Activated B cell treated with CpG ODN at 0.5 μM for 24 hours (primary cell): ENCODE measurements at regions of chr6 and their contacts with region 1.

Region 1: DNA sequence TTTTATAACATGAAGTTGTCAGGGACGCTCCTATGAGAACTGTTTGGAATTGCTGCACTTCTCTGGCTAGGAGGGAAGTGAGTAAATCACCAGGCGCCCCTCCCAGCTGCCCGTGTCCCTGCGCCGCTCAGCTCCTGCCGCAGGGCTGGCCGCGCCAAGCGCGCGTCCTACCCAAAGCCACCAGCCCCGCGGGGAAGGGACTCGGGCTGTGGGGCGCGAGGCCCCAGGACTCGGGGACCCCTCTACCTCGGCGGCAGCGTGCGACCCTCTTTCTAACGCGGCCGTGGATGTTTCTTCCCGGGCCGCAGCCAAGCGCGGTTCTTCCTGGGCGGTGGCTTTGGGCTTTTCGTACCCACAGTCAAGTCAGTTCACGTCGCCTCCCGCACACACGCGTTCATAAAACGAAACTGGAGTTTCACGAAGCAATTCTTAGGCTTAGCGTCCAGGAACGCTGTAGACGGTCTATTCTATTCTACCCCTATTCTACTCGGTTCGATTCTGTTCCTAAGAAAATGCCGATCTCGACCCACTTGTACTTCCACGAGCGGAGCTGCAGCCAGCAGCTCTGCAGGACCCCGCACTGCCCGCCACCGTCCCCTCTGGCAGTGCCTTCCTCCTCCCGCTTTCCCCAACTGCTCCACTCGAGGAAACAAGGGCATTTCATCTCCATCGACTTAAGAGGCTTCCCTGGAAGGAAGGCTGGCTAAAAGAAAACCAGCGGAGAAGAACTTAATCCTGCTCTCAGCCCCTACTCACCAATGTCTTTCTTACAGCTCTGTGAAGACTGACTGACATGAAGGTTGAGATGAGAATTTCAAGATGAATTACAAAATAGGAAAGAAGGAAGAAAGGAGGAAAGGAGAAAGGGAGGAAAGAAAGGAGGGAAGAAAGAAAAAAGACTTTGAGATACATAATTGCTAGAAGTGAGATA is 15.4 kb downstream of the FOXC1 start:
- DNase-seq: no peak
- ATAC-seq: peak; percentile 53
- H3K4me3 Mint-ChIP-seq: peak overlapping the region; percentile 78
- H3K27ac Mint-ChIP-seq: no peak overlapping the region
- H3K4me1 Mint-ChIP-seq: peaks cover 17% of the 10 kb centered on the region
- H3K27me3 Mint-ChIP-seq: peaks cover 67% of the 10 kb centered on the region
- CTCF ChIP-seq: no peak

Region 2: DNA sequence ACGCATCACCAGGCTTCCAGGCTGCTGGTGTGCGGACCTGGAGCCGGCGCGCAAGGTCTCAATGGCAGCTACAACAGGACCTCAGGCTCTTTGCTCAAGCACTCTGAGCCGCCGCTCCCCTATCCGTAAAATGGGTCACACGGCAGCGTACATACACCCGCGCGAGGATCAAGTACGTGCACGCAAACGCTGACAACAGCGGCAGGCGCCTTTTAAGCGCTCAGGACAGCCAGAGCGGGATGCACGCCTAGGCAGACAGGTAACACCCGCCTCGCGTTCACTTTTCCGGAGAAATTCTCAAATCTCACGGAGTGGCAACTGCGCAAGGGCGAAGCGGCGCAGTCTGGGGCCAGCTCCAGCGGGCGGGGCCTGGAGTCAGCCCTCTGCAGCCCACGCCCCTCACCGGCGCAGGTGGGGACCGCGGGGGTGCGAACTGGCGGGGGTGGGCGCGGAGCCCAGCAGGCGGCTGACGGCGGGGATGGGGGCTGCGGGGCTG is 932.7 kb before region 1 on chr6:
- CTCF ChIA-PET with region 1: no interaction called
- POLR2A ChIA-PET with region 1: no interaction called
- intact Hi-C with region 1: no loop called
- DNase-seq: peak; percentile 65
- ATAC-seq: peak; percentile 90
- H3K4me3 Mint-ChIP-seq: peak overlapping the region; percentile 96
- H3K27ac Mint-ChIP-seq: peak overlapping the region; percentile 85
- H3K4me1 Mint-ChIP-seq: peaks cover 30% of the 10 kb centered on the region
- H3K27me3 Mint-ChIP-seq: no peaks in the 10 kb centered on the region
- CTCF ChIP-seq: no peak

Region 3: DNA sequence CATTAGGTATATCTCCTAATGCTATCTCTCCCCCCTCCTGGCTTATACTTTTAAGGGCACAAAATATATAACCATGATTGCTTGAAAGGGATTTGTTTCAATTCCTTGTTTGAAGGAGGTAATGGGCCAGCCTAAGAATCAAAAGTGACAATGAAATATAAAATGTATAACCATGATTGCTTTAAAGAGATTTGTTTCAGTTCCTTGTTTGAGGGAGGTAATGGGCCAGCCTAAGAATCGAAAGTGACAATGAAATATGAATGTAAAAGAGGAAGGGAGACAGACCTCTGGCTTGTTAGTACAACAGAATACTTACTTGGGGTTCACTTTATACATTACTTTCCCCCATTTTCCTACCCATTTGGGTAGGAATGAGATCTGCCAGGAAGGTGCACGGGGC is 40.1 kb after region 1 on chr6:
- CTCF ChIA-PET with region 1: no interaction called
- POLR2A ChIA-PET with region 1: no interaction called
- intact Hi-C with region 1: loop called (anchors 5 kb)
- DNase-seq: no peak
- ATAC-seq: peak; percentile 92
- H3K4me3 Mint-ChIP-seq: peak overlapping the region; percentile 15
- H3K27ac Mint-ChIP-seq: peak overlapping the region; percentile 80
- H3K4me1 Mint-ChIP-seq: peaks cover 24% of the 10 kb centered on the region
- H3K27me3 Mint-ChIP-seq: peaks cover 7% of the 10 kb centered on the region
- CTCF ChIP-seq: no peak

Region 4: DNA sequence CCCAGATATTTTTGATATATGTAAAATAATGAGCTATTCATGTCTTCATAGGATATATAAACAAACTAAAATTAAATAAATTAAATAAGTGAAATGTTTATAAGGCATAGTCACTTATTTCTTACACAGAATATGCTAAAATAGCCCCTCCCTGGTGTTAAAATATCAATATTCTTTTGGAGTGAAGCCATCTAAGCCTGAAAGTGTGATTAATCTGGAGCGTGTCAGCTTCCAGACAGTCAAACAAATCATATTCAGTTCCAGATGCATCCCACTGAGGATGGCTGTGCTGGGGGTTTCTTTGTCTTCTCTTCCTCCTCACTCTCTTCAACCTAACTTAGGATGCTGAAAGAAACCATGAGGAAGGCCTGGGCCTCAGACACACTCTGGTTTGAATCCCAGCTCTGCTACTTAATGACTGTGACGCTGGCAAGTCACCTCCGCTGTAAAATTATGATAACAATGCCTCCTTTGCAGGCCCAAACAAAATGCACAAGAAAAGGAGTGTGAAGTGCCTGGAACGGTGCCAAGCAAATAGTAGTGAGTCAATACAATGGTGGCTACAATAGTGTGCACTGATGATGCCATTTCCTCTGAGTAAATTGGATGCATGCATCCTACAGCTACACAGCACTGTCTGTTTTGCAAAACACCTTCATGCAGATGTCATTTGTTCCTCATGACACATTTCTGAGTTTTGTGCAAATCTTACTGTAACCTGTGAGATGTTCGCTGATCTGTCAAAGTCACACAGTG is 146.0 kb after region 1 on chr6:
- CTCF ChIA-PET with region 1: no interaction called
- POLR2A ChIA-PET with region 1: no interaction called
- intact Hi-C with region 1: no loop called
- DNase-seq: no peak
- ATAC-seq: no peak
- H3K4me3 Mint-ChIP-seq: no peak overlapping the region
- H3K27ac Mint-ChIP-seq: no peak overlapping the region
- H3K4me1 Mint-ChIP-seq: peaks cover 3% of the 10 kb centered on the region
- H3K27me3 Mint-ChIP-seq: no peaks in the 10 kb centered on the region
- CTCF ChIP-seq: no peak

Region 5: DNA sequence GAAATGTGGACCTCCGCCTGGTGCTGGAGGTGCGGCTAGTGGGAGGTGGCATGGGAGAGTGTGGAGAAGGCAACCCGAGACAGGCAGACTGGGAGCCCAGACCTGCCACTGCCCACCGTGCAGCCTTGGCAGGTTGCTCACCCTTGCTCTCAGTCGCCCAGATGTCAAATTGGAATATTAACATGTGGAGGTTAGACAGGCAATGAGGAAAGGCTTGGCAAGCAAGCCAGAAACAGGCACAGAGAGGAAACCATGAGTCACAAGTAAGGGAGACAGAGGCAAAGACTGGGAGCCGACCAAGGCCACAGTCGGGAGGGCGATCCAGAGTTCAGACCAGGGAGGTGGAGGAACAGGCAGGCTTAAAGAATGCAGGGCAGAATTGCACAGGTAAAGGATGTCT is 162.8 kb after region 1 on chr6:
- CTCF ChIA-PET with region 1: no interaction called
- POLR2A ChIA-PET with region 1: no interaction called
- intact Hi-C with region 1: no loop called
- DNase-seq: no peak
- ATAC-seq: no peak
- H3K4me3 Mint-ChIP-seq: no peak overlapping the region
- H3K27ac Mint-ChIP-seq: no peak overlapping the region
- H3K4me1 Mint-ChIP-seq: no peaks in the 10 kb centered on the region
- H3K27me3 Mint-ChIP-seq: no peaks in the 10 kb centered on the region
- CTCF ChIP-seq: no peak

Region 6: DNA sequence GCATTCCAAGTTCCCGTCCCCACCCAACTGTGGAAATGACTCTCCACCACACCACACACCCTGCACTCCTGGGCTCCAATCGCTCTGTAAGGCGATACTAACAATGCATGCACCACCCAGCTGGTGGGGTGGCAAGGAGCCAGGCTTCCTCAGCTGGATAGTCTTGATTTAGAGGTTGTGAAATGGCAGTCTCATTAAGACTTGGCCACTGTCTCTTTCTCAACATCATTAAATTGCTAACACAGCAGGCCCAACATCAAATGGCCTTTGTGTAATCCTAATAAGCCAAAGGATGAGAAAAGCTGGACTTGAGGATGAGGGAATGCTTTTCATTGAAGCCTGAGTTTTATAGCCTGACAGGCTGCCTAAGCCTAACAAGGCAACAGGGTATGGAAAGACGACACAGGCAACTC is 396.6 kb after region 1 on chr6:
- CTCF ChIA-PET with region 1: no interaction called
- POLR2A ChIA-PET with region 1: no interaction called
- intact Hi-C with region 1: loop called (anchors 10 kb)
- DNase-seq: no peak
- ATAC-seq: no peak
- H3K4me3 Mint-ChIP-seq: no peak overlapping the region
- H3K27ac Mint-ChIP-seq: no peak overlapping the region
- H3K4me1 Mint-ChIP-seq: peaks cover 8% of the 10 kb centered on the region
- H3K27me3 Mint-ChIP-seq: no peaks in the 10 kb centered on the region
- CTCF ChIP-seq: no peak

Region 7: GRCh38 chr6:2749969-2750600 is 1125.0 kb after region 1 on chr6:
- CTCF ChIA-PET with region 1: no interaction called
- POLR2A ChIA-PET with region 1: interaction called, 11 read pairs
- intact Hi-C with region 1: no loop called
- DNase-seq: peak; percentile 53
- ATAC-seq: peak; percentile 76
- H3K4me3 Mint-ChIP-seq: no peak overlapping the region
- H3K27ac Mint-ChIP-seq: no peak overlapping the region
- H3K4me1 Mint-ChIP-seq: peaks cover 13% of the 10 kb centered on the region
- H3K27me3 Mint-ChIP-seq: peaks cover 14% of the 10 kb centered on the region
- CTCF ChIP-seq: peak; percentile 79